Transverse colon (tissue), 4 donors: ENCODE measurements at regions of chr1 and their contacts with region 1.

Region 1: DNA sequence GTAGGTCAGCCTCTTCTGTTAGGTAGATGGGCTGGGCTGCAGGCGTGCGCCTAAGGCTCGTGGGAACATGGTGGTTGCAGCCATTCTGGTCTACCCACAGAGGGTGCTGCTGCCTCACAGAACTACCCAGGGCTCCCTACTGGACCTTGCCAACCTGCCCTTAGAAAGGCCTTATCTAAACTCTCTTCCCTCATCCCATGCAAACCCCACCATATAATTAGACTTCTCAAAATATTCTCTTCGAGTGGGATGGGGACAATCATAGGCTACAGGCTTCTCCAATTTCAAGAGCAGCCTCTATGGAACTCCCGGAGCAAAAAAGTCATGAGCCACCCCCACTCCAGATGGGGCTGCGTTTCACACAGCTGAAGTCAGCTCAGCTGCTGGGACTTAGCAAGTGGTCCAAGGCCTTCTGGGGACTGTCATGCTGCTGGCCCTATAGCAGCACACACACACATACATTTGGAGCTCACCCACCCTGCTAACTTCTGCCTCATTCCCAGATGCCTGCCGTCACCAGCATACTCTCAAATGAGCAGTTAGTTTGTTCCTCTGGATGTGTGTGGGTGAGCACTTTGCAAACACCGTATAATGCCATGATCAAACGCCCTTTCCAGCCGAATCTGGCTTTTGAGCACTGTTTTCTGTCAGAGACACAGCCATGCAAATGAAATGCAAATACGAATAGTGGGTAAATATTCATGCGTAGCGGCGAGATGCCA is 6.1 kb upstream of the SDHB start:
- DNase-seq: peak; percentile 80
- H3K4me3 ChIP-seq: no peak overlapping the region
- H3K27ac ChIP-seq: no peak overlapping the region
- H3K4me1 ChIP-seq: no peaks in the 10 kb centered on the region
- H3K27me3 ChIP-seq: no peaks in the 10 kb centered on the region
- CTCF ChIP-seq: peak; percentile 51 to 72 (median 56)
- EP300 ChIP-seq: no peak
- POLR2A ChIP-seq: no peak

Region 2: DNA sequence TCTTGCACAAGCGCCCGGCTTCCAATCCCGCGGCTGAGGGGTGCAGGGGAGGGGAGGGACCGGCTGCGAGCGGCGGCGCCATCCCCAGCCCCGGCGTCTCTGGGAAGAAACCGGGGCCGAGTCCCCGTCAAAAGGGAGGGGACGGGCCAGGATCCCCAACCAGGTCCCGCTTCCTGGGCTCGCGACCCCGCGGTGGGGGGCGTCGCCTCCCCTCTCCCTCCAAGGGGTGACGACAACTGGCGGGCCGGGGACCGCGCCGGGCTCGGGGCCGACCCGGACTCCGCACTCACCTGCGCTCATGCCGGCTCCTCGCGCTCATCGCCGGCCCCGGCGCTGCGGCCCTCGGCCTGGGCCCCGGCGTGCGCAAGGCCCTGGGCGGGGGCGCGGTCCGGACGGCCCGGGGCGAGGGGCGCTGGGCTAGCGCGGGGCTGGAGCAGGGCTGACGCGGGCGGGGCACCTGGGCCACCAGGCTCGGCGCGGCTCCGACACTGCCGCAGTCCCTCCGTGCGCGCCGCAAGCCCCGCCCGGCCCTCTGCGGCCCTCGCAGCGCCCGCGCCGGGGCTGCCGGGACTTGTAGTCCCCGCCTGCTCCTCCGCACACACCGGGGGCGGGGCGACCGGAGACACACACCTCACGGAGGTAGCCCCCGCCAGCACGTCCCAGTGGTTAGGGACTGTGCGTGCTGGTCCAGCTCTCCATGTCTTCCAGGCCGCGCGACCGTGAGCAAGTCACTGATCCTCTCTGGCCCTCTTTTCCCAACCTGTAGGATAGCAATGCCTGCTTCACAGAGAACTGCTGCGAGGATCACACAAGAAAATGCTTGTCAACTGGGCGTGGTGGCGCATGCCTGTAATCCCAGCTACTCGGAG is 48.2 kb before region 1 on chr1 and contains the start of gene ATP13A2:
- in situ Hi-C with region 1: no loop called
- intact Hi-C with region 1: no loop called
- DNase-seq: peak; percentile 87
- H3K4me3 ChIP-seq: peak within 1 kb of the TSS; percentile 78 to 94 (median 88)
- H3K27ac ChIP-seq: peak within 1 kb of the TSS; percentile 49 to 78 (median 66)
- H3K4me1 ChIP-seq: peaks cover 13 to 26% (median 23%) of the 10 kb centered on the region in 4 donors
- H3K27me3 ChIP-seq: no peaks in the 10 kb centered on the region
- CTCF ChIP-seq: no peak
- EP300 ChIP-seq: no peak
- POLR2A ChIP-seq: no peak
- total RNA-seq, gene ATP13A2: 34.4 to 70.8 (median 60.9) TPM

Region 3: GRCh38 chr1:17335821-17336710 is 276.2 kb after region 1 on chr1:
- in situ Hi-C with region 1: loop called in 1 of 4 experiments (anchors 10 kb)
- intact Hi-C with region 1: no loop called
- DNase-seq: peak; percentile 69
- H3K4me3 ChIP-seq: no peak overlapping the region
- H3K27ac ChIP-seq: no peak overlapping the region
- H3K4me1 ChIP-seq: no peaks in the 10 kb centered on the region
- H3K27me3 ChIP-seq: peaks cover 11% of the 10 kb centered on the region
- CTCF ChIP-seq: peak; percentile 74 to 85 (median 77)
- EP300 ChIP-seq: no peak
- POLR2A ChIP-seq: no peak